Activated CD8-positive, alpha-beta T cell treated with anti-CD3 and anti-CD28 coated beads for 36 hours (primary cell): ENCODE measurements at regions of chr13 and their contacts with region 1.

Region 1: DNA sequence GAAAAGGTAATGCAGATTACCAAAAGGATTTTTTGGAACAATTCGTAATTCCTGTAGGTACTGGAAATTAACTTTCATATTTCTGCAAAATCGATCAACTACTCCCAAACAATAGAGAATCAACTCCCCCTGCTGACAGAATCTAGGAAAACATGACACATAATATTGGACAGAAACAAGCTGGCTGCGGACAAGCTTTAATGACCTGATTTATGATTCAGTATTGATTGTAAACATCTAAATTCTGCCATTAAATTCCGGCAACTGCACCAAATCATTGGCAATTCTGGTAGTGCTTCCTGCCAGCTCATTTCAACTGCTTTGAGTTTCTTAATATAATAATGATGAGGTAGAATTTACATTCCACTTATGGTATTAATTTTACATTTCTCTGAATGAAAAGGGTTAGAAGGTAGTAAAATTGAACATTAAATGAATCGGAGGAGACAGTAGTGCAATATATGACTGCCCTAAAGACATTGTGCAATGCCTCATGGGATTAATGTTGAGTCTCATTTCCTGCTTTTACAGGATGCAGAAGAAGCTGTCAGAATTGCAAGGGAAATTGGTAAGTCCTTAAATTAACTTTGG is 146.5 kb downstream of the PCCA start:
- DNase-seq: peak; percentile 21
- ATAC-seq: peak; percentile 47
- H3K4me3 Mint-ChIP-seq: no peak overlapping the region
- H3K27ac Mint-ChIP-seq: no peak overlapping the region
- H3K4me1 Mint-ChIP-seq: peaks cover 4% of the 10 kb centered on the region
- H3K27me3 Mint-ChIP-seq: no peaks in the 10 kb centered on the region
- CTCF ChIP-seq: peak; percentile 77

Region 2: DNA sequence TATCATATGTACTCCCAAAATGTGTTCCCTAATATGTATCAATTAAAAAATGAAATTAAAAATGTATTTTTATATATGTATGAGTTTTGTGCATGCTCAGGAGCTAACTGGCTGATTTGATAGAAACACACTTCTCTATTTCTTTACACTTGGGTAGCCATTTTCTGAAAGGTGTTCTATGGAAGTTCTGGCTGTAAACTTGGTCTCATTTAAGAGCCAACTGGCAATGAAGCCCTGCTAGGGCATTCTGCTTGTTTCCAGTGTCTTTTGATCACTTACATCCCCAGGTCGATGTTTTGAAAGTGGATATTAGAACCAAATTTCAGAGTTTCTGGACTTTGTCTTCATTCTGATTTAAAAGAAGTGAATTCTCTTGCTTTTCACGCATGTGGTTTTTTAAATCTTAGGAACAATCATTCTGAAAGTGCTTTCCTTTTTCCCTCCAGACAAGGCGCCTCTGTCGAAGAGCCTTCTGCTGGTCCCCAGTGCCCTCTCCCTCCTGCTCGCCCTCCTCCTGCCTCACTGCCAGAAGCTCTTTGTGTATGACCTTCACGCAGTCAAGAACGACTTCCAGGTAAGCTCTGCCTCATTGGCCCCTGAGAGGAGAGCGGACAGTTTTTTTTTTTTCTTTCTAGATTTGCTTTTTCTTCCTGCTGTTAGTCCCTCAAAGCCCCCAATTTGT is 997.3 kb before region 1 on chr13:
- CTCF ChIA-PET with region 1: no interaction called
- POLR2A ChIA-PET with region 1: no interaction called
- intact Hi-C with region 1: no loop called
- DNase-seq: peak; percentile 47
- ATAC-seq: peak; percentile 87
- H3K4me3 Mint-ChIP-seq: peak overlapping the region; percentile 73
- H3K27ac Mint-ChIP-seq: peak overlapping the region; percentile 92
- H3K4me1 Mint-ChIP-seq: peaks cover 59% of the 10 kb centered on the region
- H3K27me3 Mint-ChIP-seq: no peaks in the 10 kb centered on the region
- CTCF ChIP-seq: no peak

Region 3: GRCh38 chr13:99895995-99896786 is 339.2 kb before region 1 on chr13:
- CTCF ChIA-PET with region 1: interaction called, 18 read pairs
- POLR2A ChIA-PET with region 1: interaction called, 5 read pairs
- intact Hi-C with region 1: loop called (anchors 5 kb)
- DNase-seq: no peak
- ATAC-seq: no peak
- H3K4me3 Mint-ChIP-seq: peak overlapping the region; percentile 61
- H3K27ac Mint-ChIP-seq: no peak overlapping the region
- H3K4me1 Mint-ChIP-seq: peaks cover 8% of the 10 kb centered on the region
- H3K27me3 Mint-ChIP-seq: peaks cover 55% of the 10 kb centered on the region
- CTCF ChIP-seq: no peak

Region 4: DNA sequence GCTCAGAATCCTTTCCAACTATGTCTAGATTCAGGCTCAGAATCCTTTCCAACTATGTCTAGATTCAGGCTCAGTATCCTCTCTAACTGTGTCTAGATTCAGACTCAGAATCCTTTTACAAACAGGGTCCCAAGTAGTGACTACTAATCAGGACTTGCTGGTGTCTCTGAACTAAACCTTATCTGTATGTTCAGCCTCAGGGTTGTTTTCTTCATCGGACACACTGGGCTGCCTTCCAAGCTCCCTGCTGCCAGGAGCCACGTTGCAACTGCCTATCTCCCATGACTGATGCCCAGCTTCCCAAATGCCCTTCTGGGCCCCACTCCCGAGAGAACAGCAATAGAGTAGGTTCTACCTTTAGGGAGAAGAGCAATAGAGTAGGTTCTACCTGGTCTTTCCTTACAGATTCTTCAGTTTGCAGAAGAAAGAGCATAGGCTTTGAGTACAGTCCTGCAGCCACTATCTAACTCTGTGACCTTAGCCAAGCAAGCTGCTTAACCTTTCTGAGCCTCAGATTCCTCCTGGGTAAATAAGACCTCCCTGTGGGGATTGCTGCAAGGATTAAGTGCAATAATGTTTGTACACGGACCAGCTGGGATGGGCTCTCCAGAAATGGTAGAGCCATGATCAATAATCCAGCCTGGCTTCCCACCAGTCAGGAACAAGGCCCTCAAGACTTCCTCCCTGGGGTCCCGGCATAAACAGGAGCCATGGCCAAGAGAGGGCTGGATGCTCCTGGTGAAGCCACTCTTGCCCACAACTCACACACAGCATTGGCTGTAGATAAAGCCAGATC is 325.4 kb before region 1 on chr13:
- CTCF ChIA-PET with region 1: interaction called, 12 read pairs
- POLR2A ChIA-PET with region 1: no interaction called
- intact Hi-C with region 1: no loop called
- DNase-seq: no peak
- ATAC-seq: no peak
- H3K4me3 Mint-ChIP-seq: no peak overlapping the region
- H3K27ac Mint-ChIP-seq: no peak overlapping the region
- H3K4me1 Mint-ChIP-seq: peaks cover 15% of the 10 kb centered on the region
- H3K27me3 Mint-ChIP-seq: peaks cover 45% of the 10 kb centered on the region
- CTCF ChIP-seq: no peak

Region 5: DNA sequence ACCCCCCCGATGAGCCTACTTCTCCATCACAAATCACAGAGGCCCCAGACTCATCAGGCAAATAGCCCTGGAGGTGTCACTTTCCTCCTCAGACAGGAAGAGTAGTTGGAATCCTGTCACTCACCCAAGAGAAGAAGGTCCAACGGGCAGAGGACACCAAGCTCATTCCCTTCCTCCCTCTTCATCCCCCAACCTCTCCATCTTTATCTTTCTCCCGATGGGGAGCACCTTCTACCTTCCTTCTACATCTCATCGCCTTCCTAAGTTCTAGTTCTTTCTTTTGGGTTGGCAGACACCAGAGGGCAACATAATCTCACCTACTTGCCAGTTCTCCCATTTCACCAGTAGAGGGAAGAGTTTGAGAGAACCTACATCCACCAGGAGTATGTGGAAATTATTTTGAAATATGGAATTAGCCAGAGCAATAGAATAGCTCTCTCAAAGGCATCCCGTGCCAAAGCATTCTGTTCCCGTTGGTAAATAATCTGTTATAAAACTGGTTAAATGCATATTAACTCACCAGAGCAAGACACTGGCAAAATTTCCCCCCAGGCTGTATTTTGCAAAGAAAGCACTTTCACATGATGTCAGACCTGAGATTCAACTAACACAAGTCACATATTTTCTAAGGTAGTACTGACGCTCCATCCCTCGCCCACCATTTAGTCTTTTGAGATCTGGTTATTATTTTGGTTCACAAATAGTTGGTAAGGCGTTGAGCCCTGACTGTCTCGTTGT is 318.9 kb before region 1 on chr13:
- CTCF ChIA-PET with region 1: interaction called, 17 read pairs
- POLR2A ChIA-PET with region 1: no interaction called
- intact Hi-C with region 1: loop called (anchors 2 kb)
- DNase-seq: peak; percentile 16
- ATAC-seq: peak; percentile 78
- H3K4me3 Mint-ChIP-seq: no peak overlapping the region
- H3K27ac Mint-ChIP-seq: no peak overlapping the region
- H3K4me1 Mint-ChIP-seq: peaks cover 12% of the 10 kb centered on the region
- H3K27me3 Mint-ChIP-seq: peaks cover 18% of the 10 kb centered on the region
- CTCF ChIP-seq: peak; percentile 94

Region 6: DNA sequence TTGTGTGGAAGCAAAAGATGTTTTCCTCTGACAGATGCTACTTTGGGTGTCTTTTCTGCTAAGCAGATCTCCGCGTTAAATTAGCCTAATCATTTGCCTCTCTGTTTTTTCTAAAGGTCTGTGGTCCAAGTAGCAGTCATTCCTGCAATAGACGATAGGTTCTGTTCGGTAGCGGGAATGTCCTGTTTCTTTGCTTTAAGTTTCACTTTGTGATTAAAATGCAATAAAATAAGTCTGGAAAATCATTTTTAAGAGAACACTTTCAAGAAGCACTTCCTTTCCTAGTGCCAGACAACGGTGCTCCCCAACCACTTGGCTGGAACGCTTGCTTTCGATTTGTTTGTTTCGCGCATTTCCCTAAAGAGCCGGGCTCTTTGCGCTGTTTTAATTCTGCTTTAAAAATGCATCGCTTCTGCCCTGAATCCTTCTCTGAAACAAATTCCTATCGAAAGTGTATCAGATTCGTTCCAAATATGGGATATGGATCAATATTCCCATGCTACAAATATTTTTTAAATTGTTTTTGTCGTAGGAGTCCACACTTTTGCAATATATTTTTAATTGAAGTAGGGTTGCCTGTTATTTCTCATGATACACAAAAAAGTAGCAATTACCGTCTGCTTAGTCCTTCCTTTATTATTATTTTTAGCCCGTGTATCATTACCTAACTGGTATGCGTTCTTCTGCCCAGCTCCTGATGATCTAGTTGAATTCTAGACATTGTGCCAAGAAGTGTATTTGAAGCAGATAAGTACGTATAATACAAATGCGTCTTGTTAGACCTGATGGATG is 239.6 kb before region 1 on chr13:
- CTCF ChIA-PET with region 1: no interaction called
- POLR2A ChIA-PET with region 1: no interaction called
- intact Hi-C with region 1: loop called (anchors 10 kb)
- DNase-seq: no peak
- ATAC-seq: no peak
- H3K4me3 Mint-ChIP-seq: no peak overlapping the region
- H3K27ac Mint-ChIP-seq: no peak overlapping the region
- H3K4me1 Mint-ChIP-seq: peaks cover 9% of the 10 kb centered on the region
- H3K27me3 Mint-ChIP-seq: peaks cover 79% of the 10 kb centered on the region
- CTCF ChIP-seq: no peak

Region 7: GRCh38 chr13:100063333-100063732 is 172.1 kb before region 1 on chr13:
- CTCF ChIA-PET with region 1: no interaction called
- POLR2A ChIA-PET with region 1: no interaction called
- intact Hi-C with region 1: loop called (anchors 10 kb)
- DNase-seq: no peak
- ATAC-seq: no peak
- H3K4me3 Mint-ChIP-seq: no peak overlapping the region
- H3K27ac Mint-ChIP-seq: no peak overlapping the region
- H3K4me1 Mint-ChIP-seq: no peaks in the 10 kb centered on the region
- H3K27me3 Mint-ChIP-seq: peaks cover 9% of the 10 kb centered on the region
- CTCF ChIP-seq: no peak

Region 8: DNA sequence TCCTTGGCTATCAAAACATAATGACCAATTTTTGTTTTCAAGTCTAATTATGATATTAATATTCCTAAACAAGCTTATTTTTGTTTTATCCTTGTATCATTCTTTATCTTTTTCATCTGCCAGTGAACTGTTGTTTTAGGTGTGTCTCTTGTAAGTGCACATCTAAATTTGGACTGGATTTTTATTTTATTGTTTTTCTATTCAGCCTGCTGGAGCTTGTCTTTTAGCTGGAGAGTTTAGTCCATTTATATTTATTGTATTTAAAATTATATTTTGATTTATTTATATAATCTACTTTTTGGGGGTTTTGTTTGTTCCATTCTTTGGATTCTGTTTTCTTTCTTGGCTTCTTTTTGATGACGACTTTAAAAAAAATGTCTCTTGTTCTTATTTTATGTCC is 12.5 kb after region 1 on chr13:
- CTCF ChIA-PET with region 1: no interaction called
- POLR2A ChIA-PET with region 1: no interaction called
- intact Hi-C with region 1: no loop called
- DNase-seq: no peak
- ATAC-seq: no peak
- H3K4me3 Mint-ChIP-seq: no peak overlapping the region
- H3K27ac Mint-ChIP-seq: no peak overlapping the region
- H3K4me1 Mint-ChIP-seq: no peaks in the 10 kb centered on the region
- H3K27me3 Mint-ChIP-seq: no peaks in the 10 kb centered on the region
- CTCF ChIP-seq: no peak

Region 9: DNA sequence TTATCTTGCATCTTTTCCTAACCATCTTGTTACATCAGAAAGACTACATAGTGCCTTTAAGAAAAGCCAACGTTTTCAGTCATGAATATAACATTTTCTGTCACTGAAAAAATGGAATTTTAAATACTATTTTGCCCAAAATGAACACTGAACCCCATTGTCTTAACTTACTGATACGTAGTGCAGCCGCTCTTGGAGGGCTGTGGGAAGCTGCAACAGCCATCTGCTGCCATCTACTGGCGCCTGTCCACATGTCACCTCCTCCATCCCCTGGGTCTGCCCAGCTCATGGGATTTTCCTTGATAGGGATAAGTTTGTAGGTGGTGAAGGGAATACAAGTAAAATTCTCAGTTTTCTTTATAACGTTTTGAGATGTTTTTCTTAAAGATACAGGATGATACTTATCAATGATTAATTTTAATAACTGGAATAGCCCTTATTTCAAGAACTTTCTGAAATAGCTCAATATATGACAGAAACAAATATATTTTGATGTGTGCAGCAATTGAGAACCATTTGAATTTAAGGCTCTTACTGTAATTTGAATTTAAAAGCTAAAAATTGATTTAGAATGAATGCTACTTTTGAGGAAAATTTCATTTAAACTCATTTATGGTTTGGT is 279.5 kb after region 1 on chr13:
- CTCF ChIA-PET with region 1: interaction called, 10 read pairs
- POLR2A ChIA-PET with region 1: no interaction called
- intact Hi-C with region 1: loop called (anchors 10 kb)
- DNase-seq: peak; percentile 83
- ATAC-seq: peak; percentile 84
- H3K4me3 Mint-ChIP-seq: no peak overlapping the region
- H3K27ac Mint-ChIP-seq: no peak overlapping the region
- H3K4me1 Mint-ChIP-seq: peaks cover 10% of the 10 kb centered on the region
- H3K27me3 Mint-ChIP-seq: no peaks in the 10 kb centered on the region
- CTCF ChIP-seq: peak; percentile 99